T-cell (primary cell): ENCODE measurements at regions of chr1 and their contacts with region 1.

Region 1: DNA sequence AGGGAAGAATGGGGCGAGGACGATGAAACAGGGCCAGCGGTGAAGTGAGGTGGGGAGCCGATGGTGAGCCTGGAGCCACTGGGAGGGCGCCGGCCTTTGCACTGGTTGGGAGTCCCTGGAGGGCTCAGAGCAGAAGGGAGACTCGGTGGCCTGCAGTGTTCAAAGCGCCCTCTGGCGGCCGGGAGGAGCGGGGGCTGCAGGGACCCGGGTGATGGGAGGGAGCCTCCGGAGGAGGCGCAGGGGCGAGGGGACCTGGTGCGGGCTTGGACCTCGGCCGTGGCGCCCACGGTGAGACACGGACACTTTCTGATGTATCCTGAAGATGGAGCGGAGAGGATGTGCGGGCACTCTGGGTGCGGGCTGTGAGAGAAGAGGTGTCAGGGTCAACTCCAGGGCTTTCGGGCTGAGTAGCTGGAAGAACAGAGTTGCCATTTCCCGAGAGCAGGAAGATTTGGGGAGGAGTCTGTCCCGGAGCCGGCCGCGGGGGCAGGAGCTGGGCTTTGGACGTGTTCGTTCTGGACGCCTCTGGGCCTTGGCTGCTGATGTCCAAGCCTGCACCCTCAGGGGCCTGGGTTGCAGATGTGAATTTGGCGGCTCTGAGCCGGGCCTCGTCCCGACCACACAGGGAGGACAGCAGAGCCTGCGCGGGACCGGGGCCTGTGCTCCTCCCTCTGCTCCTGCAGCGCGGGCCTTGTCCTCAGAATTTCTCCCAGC is 29.7 kb downstream of the HEYL start:
- DNase-seq: peak in 34 of 35 experiments; percentile 32 to 84 (median 64)
- ATAC-seq: peak; percentile 84 to 91 (median 88)
- H3K4me3 ChIP-seq: no peak overlapping the region
- H3K4me3 Mint-ChIP-seq: no peak overlapping the region
- H3K27ac ChIP-seq: no peak overlapping the region
- H3K27ac Mint-ChIP-seq: no peak overlapping the region
- H3K4me1 ChIP-seq: peaks cover 0 to 9% of the 10 kb centered on the region in 2 experiments
- H3K4me1 Mint-ChIP-seq: peaks cover 5 to 12% (median 8%) of the 10 kb centered on the region in 3 donors
- H3K27me3 ChIP-seq: peaks cover 0 to 12% of the 10 kb centered on the region in 2 experiments
- H3K27me3 Mint-ChIP-seq: peaks cover 0 to 5% of the 10 kb centered on the region in 2 donors

Region 2: GRCh38 chr1:38848071-38848470 is 761.7 kb before region 1 on chr1:
- CTCF ChIA-PET with region 1: interaction called in 1 of 2 experiments, 10 read pairs
- POLR2A ChIA-PET with region 1: no interaction called
- DNase-seq: no peak
- ATAC-seq: no peak
- H3K4me3 ChIP-seq: no peak overlapping the region
- H3K4me3 Mint-ChIP-seq: no peak overlapping the region
- H3K27ac ChIP-seq: no peak overlapping the region
- H3K27ac Mint-ChIP-seq: no peak overlapping the region
- H3K4me1 ChIP-seq: peaks cover 0 to 3% of the 10 kb centered on the region in 2 experiments
- H3K4me1 Mint-ChIP-seq: peaks cover 20 to 27% (median 24%) of the 10 kb centered on the region in 3 donors
- H3K27me3 ChIP-seq: no peaks in the 10 kb centered on the region
- H3K27me3 Mint-ChIP-seq: no peaks in the 10 kb centered on the region

Region 3: GRCh38 chr1:39657923-39658485 is 48.2 kb after region 1 on chr1:
- CTCF ChIA-PET with region 1: interaction called, 8 to 17 read pairs
- POLR2A ChIA-PET with region 1: no interaction called
- DNase-seq: peak; percentile 12 to 79 (median 47)
- ATAC-seq: peak in 3 of 4 experiments; percentile 44 to 72 (median 59)
- H3K4me3 ChIP-seq: no peak overlapping the region
- H3K4me3 Mint-ChIP-seq: no peak overlapping the region
- H3K27ac ChIP-seq: no peak overlapping the region
- H3K27ac Mint-ChIP-seq: no peak overlapping the region
- H3K4me1 ChIP-seq: peaks cover 0 to 12% of the 10 kb centered on the region in 2 experiments
- H3K4me1 Mint-ChIP-seq: peaks cover 6 to 13% (median 11%) of the 10 kb centered on the region in 3 donors
- H3K27me3 ChIP-seq: peaks cover 3 to 16% of the 10 kb centered on the region in 2 experiments
- H3K27me3 Mint-ChIP-seq: peaks cover 0 to 7% of the 10 kb centered on the region in 2 donors

Region 4: DNA sequence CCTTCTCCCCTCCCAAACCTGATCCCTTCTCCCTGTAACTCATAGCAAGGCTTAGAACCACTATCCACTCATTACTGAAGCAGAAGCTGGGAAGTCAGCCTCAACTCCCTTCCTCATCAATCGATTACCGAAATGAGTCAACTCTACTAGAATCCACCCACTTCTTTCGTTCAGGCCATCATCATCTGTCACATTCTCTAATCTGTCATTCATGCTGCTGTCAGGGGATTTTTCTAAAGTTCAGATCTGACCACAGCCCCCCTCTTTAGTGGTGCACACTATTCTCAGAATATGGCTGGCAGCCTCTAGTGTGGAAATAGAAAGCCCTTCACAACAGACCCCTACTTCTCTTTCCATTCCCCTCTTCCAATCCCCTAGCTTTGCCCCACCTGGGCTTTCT is 57.0 kb after region 1 on chr1:
- CTCF ChIA-PET with region 1: interaction called in 1 of 2 experiments, 10 read pairs
- POLR2A ChIA-PET with region 1: interaction called in 1 of 2 experiments, 10 read pairs
- DNase-seq: no peak
- ATAC-seq: no peak
- H3K4me3 ChIP-seq: no peak overlapping the region
- H3K4me3 Mint-ChIP-seq: no peak overlapping the region
- H3K27ac ChIP-seq: no peak overlapping the region
- H3K27ac Mint-ChIP-seq: no peak overlapping the region
- H3K4me1 ChIP-seq: peaks cover 0 to 9% of the 10 kb centered on the region in 2 experiments
- H3K4me1 Mint-ChIP-seq: peaks cover 5 to 6% (median 6%) of the 10 kb centered on the region in 3 donors
- H3K27me3 ChIP-seq: peaks cover 4 to 45% of the 10 kb centered on the region in 2 experiments
- H3K27me3 Mint-ChIP-seq: peaks cover 18 to 32% of the 10 kb centered on the region in 2 donors

Region 5: GRCh38 chr1:39672551-39672947 is 62.8 kb after region 1 on chr1:
- CTCF ChIA-PET with region 1: interaction called, 4 to 10 read pairs
- POLR2A ChIA-PET with region 1: no interaction called
- DNase-seq: peak in 15 of 35 experiments; percentile 13 to 62 (median 31)
- ATAC-seq: peak in 3 of 4 experiments; percentile 29 to 49 (median 44)
- H3K4me3 ChIP-seq: peak overlapping the region in 1 of 2 donors; percentile 15
- H3K4me3 Mint-ChIP-seq: peak overlapping the region; percentile 63 to 66 (median 66)
- H3K27ac ChIP-seq: no peak overlapping the region
- H3K27ac Mint-ChIP-seq: no peak overlapping the region
- H3K4me1 ChIP-seq: peaks cover 0 to 20% of the 10 kb centered on the region in 2 experiments
- H3K4me1 Mint-ChIP-seq: peaks cover 6 to 9% (median 8%) of the 10 kb centered on the region in 3 donors
- H3K27me3 ChIP-seq: peaks cover 10 to 55% of the 10 kb centered on the region in 2 experiments
- H3K27me3 Mint-ChIP-seq: peaks cover 18 to 39% of the 10 kb centered on the region in 2 donors

Region 6: DNA sequence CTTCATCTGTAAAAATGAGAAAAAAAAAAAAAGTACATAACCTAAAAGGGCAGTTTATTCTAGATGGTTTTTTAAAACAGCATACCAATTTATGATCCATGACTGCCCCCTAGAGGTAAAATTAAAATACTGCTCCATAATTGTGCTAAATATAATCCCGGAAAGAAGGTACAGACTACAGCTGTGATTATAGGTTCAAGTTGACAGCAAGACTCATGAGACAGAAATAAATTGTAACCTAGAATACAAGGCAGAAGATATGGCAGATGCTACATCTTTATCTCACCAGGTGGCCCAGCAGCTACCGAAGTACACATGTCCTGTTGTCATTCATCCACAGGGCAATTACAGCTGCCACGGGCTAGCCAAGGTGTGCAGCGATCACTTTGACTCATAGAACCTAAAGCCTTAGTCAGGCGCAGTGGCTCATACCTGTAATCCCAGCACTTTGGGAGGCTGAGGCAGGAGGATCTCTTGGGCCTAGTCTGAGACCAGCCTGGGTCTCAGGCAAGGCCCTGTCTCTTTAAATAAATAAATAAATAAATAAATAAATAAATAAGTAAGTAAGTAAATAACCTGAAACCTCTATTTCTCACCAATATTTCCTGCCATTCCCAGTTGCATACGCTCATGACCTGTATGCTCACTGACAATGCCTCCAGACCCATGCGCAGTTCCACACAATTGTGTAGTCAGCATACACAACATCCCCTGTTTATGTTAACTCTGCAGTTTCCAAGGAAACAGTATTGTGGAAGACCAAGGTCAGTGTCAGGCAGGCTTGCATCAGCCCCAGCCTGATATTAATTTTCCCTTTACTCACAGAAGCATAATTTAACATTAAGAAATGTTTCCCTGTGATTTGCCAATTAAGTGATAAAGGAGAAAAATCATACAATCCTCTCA is 110.6 kb after region 1 on chr1:
- CTCF ChIA-PET with region 1: interaction called, 3 to 22 read pairs
- POLR2A ChIA-PET with region 1: no interaction called
- DNase-seq: peak in 2 of 35 experiments; percentile 16 to 83
- ATAC-seq: peak; percentile 42 to 77 (median 72)
- H3K4me3 ChIP-seq: no peak overlapping the region
- H3K4me3 Mint-ChIP-seq: no peak overlapping the region
- H3K27ac ChIP-seq: no peak overlapping the region
- H3K27ac Mint-ChIP-seq: no peak overlapping the region
- H3K4me1 ChIP-seq: no peaks in the 10 kb centered on the region
- H3K4me1 Mint-ChIP-seq: no peaks in the 10 kb centered on the region
- H3K27me3 ChIP-seq: peaks cover 5 to 11% of the 10 kb centered on the region in 2 experiments
- H3K27me3 Mint-ChIP-seq: peaks cover 29 to 32% of the 10 kb centered on the region in 2 donors

Region 7: GRCh38 chr1:39799770-39800470 is 190.1 kb after region 1 on chr1:
- CTCF ChIA-PET with region 1: interaction called in 1 of 2 experiments, 14 read pairs
- POLR2A ChIA-PET with region 1: interaction called in 1 of 2 experiments, 3 read pairs
- DNase-seq: peak; percentile 15 to 72 (median 47)
- ATAC-seq: peak; percentile 67 to 80 (median 69)
- H3K4me3 ChIP-seq: peak overlapping the region in 1 of 2 donors; percentile 41
- H3K4me3 Mint-ChIP-seq: peak overlapping the region; percentile 72 to 79 (median 76)
- H3K27ac ChIP-seq: peak overlapping the region; percentile 96
- H3K27ac Mint-ChIP-seq: peak overlapping the region; percentile 94 to 95
- H3K4me1 ChIP-seq: peaks cover 3 to 15% of the 10 kb centered on the region in 2 experiments
- H3K4me1 Mint-ChIP-seq: peaks cover 9 to 17% (median 11%) of the 10 kb centered on the region in 3 donors
- H3K27me3 ChIP-seq: no peaks in the 10 kb centered on the region
- H3K27me3 Mint-ChIP-seq: no peaks in the 10 kb centered on the region